ENCODE measurements at regions of chr9 and their contacts with region 1.

Region 1: GRCh38 chr9:84668196-84669012 is 1.1 kb upstream of the NTRK2 start:
- DNase-seq: no peak
- ATAC-seq: peak; percentile 95
- H3K4me3 ChIP-seq: peak overlapping the region; percentile 56
- H3K27ac ChIP-seq: no peak overlapping the region
- H3K4me1 ChIP-seq: peaks cover 4% of the 10 kb centered on the region; the same call in 1 of the 2 replicates
- H3K27me3 ChIP-seq: peaks cover 5 to 11% of the 10 kb centered on the region in 2 experiments; a peak in 3 of 4 replicates
- CTCF ChIP-seq: peak; percentile 59 to 65 (median 61); a peak in 5 of 6 replicates
- EP300 ChIP-seq: no peak
- POLR2A ChIP-seq: no peak
- RAD21 ChIP-seq: peak; percentile 45

Region 2: GRCh38 chr9:83940590-83941302 is 727.7 kb before region 1 on chr9:
- CTCF ChIA-PET with region 1: no interaction called
- POLR2A ChIA-PET with region 1: no interaction called
- RAD21 ChIA-PET with region 1: no interaction called
- SMC1A ChIA-PET with region 1: no interaction called
- in situ Hi-C with region 1: no loop called
- intact Hi-C with region 1: no loop called
- DNase-seq: no peak
- ATAC-seq: no peak
- H3K4me3 ChIP-seq: no peak overlapping the region
- H3K27ac ChIP-seq: no peak overlapping the region
- H3K4me1 ChIP-seq: no peaks in the 10 kb centered on the region
- H3K27me3 ChIP-seq: no peaks in the 10 kb centered on the region
- CTCF ChIP-seq: no peak
- EP300 ChIP-seq: no peak
- POLR2A ChIP-seq: no peak
- RAD21 ChIP-seq: no peak

Region 3: GRCh38 chr9:84947363-84947972 is 279.1 kb after region 1 on chr9:
- CTCF ChIA-PET with region 1: interaction called, 3 read pairs
- POLR2A ChIA-PET with region 1: no interaction called
- RAD21 ChIA-PET with region 1: no interaction called
- SMC1A ChIA-PET with region 1: no interaction called
- in situ Hi-C with region 1: loop called (anchors 10 kb)
- intact Hi-C with region 1: no loop called
- DNase-seq: no peak
- ATAC-seq: no peak
- H3K4me3 ChIP-seq: no peak overlapping the region
- H3K27ac ChIP-seq: no peak overlapping the region
- H3K4me1 ChIP-seq: no peaks in the 10 kb centered on the region
- H3K27me3 ChIP-seq: no peaks in the 10 kb centered on the region; a peak in 1 of 4 replicates
- CTCF ChIP-seq: no peak
- EP300 ChIP-seq: no peak
- POLR2A ChIP-seq: no peak
- RAD21 ChIP-seq: no peak

Region 4: DNA sequence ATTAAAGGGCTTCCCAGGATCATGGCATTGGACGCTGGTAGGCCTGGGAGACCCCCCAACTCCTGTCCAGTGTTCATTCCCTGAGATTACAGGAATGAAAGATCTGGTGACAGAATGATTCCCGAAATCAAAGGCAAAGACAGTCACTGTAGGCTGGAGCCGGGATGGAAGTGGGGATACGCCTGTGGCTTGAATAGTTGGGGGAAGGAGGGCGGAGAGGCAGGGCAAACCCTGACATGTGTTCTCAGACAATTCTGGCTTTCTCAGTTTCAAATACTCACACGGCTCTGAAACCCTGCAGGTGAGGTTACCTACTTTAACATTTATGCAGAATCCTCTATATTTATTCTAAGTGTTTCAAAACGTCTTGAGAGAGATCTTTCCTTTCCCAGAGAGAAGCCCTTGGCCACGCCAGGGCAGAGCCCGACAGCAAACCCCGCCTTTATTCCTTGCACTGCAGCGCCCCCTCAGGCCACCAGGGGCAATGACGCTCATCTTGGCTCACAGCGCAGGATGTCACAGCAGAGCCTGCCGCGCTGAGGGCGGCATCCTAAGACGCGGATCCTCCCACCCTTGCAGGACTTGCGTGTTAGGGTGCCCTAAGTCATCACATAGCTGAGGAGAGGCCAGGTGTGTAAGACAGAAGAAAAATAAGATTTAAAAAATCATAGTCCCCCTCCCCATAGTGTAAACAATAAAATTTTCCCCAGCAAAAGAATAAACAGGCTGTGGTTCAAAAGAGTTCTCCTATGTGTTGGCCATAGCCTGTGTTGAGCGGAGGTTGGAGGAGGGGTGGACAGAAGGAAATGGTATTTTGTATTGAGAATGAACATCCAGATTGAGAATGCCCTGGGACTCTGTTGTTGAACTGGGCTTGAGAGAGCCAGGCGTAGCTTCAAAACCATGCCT is 285.6 kb after region 1 on chr9:
- CTCF ChIA-PET with region 1: interaction called, 3 read pairs
- POLR2A ChIA-PET with region 1: no interaction called
- RAD21 ChIA-PET with region 1: interaction called, 3 read pairs
- SMC1A ChIA-PET with region 1: interaction called, 3 read pairs
- in situ Hi-C with region 1: loop called (anchors 10 kb)
- intact Hi-C with region 1: loop called (anchors 2 kb)
- DNase-seq: no peak
- ATAC-seq: peak; percentile 99
- H3K4me3 ChIP-seq: no peak overlapping the region
- H3K27ac ChIP-seq: no peak overlapping the region
- H3K4me1 ChIP-seq: no peaks in the 10 kb centered on the region
- H3K27me3 ChIP-seq: no peaks in the 10 kb centered on the region
- CTCF ChIP-seq: peak; percentile 93 to 95 (median 94)
- EP300 ChIP-seq: no peak
- POLR2A ChIP-seq: no peak
- RAD21 ChIP-seq: peak; percentile 83

Measured in GM12878 (cell line).